Naive thymus-derived CD8-positive, alpha-beta T cell (primary cell): ENCODE measurements at regions of chr11 and their contacts with region 1.

Region 1: DNA sequence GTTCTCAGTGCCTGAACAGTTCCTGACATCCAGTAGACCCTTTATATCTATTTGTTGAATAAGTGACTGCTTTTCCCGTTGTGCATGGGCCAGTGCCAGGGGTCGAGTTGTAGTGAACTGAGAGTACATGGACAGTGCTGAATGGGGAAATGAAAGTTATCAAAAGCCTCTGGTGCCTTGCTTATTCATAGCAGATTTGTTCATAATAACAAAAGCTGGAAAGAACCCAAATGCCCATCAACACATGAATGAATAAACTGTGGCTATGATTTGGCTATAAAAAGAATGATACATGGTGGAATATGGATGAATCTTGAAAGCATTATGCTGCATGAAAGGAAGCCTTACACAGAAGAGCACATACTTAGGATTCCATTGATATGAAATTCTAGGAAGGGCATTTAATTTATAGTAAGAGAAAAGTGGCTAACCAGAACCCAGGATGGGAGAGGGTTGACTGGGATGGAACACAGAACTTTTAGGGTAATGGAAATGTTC is 42.6 kb downstream of the PACS1 start:
- DNase-seq: no peak
- ATAC-seq: no peak
- H3K4me3 Mint-ChIP-seq: peak overlapping the region in 8 of 10 donors; percentile 41 to 78 (median 69)
- H3K27ac Mint-ChIP-seq: peak overlapping the region; percentile 74 to 96 (median 86)
- H3K4me1 Mint-ChIP-seq: peaks cover 51 to 99% (median 96%) of the 10 kb centered on the region in 4 donors
- H3K27me3 Mint-ChIP-seq: no peaks in the 10 kb centered on the region

Region 2: DNA sequence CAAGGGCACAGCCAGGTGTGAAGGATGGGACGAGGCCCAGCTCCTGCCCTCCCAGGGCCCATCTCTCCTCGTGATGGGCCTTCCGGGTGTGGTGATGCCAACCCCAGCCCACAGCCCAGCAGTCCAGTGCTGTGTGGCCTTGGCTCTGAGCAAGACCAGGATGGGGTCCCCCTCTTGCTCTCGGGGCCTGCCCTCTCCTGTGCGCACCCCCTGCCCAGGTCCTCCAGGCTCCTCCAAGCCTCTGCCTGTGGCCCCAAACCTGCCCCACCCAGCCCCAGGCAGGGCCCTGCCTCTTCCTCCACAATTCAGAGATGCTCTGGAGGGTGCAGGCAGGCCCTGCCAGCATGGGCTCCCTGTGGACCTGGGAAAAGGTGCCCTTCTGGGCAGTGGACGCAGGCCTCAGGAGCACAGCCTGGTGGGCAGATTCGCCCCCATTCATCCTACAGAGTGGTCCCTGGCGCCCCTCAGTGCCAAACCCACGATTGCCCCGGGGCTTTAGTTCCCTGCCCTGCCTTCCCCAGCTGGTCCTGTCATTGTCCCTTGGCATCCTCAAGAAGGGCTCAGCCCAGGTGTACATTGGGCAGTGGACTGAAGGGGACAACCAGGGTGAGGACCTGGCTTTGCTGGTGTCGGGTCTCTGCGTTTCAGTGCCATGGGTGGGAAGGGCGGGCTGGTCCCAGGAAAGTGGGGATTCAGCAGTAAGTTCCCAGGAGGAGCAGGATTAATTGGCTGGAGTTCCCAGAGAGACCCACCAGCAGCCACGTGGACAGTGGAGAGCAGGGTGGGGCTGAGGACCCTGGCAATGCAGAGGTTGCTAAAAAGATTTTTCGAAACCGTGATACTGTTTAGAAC is 130.5 kb before region 1 on chr11:
- POLR2A ChIA-PET with region 1: no interaction called
- DNase-seq: no peak
- ATAC-seq: no peak
- H3K4me3 Mint-ChIP-seq: no peak overlapping the region
- H3K27ac Mint-ChIP-seq: peak overlapping the region in 2 of 10 donors; percentile 53 to 81
- H3K4me1 Mint-ChIP-seq: no peaks in the 10 kb centered on the region
- H3K27me3 Mint-ChIP-seq: no peaks in the 10 kb centered on the region

Region 3: GRCh38 chr11:66100272-66101065 is 12.2 kb before region 1 on chr11:
- POLR2A ChIA-PET with region 1: interaction called, 33 read pairs
- DNase-seq: peak; percentile 48 to 85 (median 70)
- ATAC-seq: peak; percentile 94 to 98
- H3K4me3 Mint-ChIP-seq: peak overlapping the region; percentile 75 to 90 (median 86)
- H3K27ac Mint-ChIP-seq: peak overlapping the region; percentile 91 to 98 (median 95)
- H3K4me1 Mint-ChIP-seq: peaks cover 41 to 81% (median 72%) of the 10 kb centered on the region in 4 donors
- H3K27me3 Mint-ChIP-seq: no peaks in the 10 kb centered on the region

Region 4: GRCh38 chr11:66126808-66127555 is 14.3 kb after region 1 on chr11:
- POLR2A ChIA-PET with region 1: interaction called, 12 read pairs
- DNase-seq: peak; percentile 23 to 75 (median 55)
- ATAC-seq: peak; percentile 92
- H3K4me3 Mint-ChIP-seq: peak overlapping the region; percentile 61 to 89 (median 81)
- H3K27ac Mint-ChIP-seq: peak overlapping the region; percentile 88 to 98 (median 96)
- H3K4me1 Mint-ChIP-seq: peaks cover 44 to 84% (median 83%) of the 10 kb centered on the region in 4 donors
- H3K27me3 Mint-ChIP-seq: no peaks in the 10 kb centered on the region